ENCODE measurements at regions of chr6 and their contacts with region 1.

Region 1: DNA sequence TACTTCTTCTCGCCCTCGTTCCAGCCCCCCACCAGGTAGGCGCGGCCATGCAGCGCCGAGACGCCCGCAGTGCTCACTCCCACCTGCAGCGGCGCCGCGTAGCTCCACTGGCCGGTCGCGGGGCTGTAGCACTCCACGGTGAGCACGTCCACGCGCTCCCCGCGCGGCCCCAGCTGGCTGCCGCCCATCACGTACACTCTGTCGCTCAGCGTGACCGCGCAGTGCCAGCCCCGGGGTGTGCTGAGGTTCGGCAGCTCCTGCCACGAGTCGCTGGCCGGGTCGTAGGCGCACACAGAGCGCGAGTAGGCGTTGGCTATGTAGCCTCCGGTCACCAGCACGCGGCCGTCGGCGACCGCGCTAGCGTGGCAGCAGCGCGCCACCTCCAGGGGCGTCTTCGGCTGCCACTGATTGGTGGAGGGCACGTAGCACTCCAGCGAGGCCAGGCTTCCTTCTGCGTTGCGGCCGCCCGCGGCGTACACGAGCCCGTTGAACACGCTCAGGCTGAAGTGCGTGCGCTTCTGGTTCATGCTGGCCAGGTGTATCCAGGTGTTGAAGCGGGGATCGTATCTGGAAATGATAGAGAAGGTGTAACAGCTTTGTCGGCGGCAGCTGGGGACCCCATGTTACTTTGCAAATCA is 13.7 kb downstream of the KLHL31 start:
- DNase-seq: peak; percentile 57 to 91 (median 79)
- ATAC-seq: peak; percentile 86
- H3K4me3 ChIP-seq: peak overlapping the region; percentile 67 to 81
- H3K4me3 Mint-ChIP-seq: peak overlapping the region; percentile 91
- H3K27ac ChIP-seq: peak overlapping the region; percentile 54 to 65
- H3K27ac Mint-ChIP-seq: peak overlapping the region; percentile 89
- H3K4me1 ChIP-seq: peaks cover 32% of the 10 kb centered on the region
- H3K4me1 Mint-ChIP-seq: peaks cover 32% of the 10 kb centered on the region
- H3K27me3 ChIP-seq: no peaks in the 10 kb centered on the region
- H3K27me3 Mint-ChIP-seq: no peaks in the 10 kb centered on the region
- CTCF ChIP-seq: no peak

Region 2: DNA sequence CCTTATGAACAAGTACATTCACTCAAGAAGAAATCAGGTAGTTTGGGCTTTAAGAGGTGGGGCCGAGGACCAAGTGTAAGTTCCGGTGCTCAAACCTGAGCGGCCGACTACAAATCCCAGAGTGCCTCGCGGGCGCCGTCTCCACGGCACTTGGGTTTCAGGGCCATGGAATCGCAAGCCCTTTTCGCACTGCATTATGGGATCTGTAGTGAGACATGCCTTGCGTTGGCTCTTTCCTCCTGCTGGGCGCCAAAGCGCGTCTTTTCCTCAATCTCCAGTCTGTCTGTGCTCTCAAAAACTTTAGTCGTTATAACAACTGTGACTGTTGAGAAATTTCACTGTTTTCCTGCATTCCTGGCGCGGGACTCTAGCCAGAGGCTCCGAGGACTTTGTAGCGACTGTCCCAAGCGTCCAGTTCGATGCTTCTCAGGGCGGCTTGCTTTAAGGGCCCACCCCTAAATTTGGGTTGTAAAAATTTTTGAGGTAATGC is 587.1 kb before region 1 on chr6:
- CTCF ChIA-PET with region 1: interaction called, 3 read pairs
- POLR2A ChIA-PET with region 1: no interaction called
- intact Hi-C with region 1: loop called in 1 of 2 experiments (anchors 2 kb)
- DNase-seq: peak; percentile 90 to 98 (median 96)
- ATAC-seq: peak; percentile 83
- H3K4me3 ChIP-seq: peak overlapping the region; percentile 79 to 83
- H3K4me3 Mint-ChIP-seq: peak overlapping the region; percentile 100
- H3K27ac ChIP-seq: peak overlapping the region; percentile 55 to 81
- H3K27ac Mint-ChIP-seq: peak overlapping the region; percentile 98
- H3K4me1 ChIP-seq: peaks cover 39% of the 10 kb centered on the region
- H3K4me1 Mint-ChIP-seq: peaks cover 60% of the 10 kb centered on the region
- H3K27me3 ChIP-seq: no peaks in the 10 kb centered on the region
- H3K27me3 Mint-ChIP-seq: no peaks in the 10 kb centered on the region
- CTCF ChIP-seq: no peak

Region 3: GRCh38 chr6:53879608-53880007 is 227.7 kb after region 1 on chr6:
- CTCF ChIA-PET with region 1: no interaction called
- POLR2A ChIA-PET with region 1: no interaction called
- intact Hi-C with region 1: no loop called
- DNase-seq: no peak
- ATAC-seq: no peak
- H3K4me3 ChIP-seq: no peak overlapping the region
- H3K4me3 Mint-ChIP-seq: no peak overlapping the region
- H3K27ac ChIP-seq: no peak overlapping the region
- H3K27ac Mint-ChIP-seq: no peak overlapping the region
- H3K4me1 ChIP-seq: no peaks in the 10 kb centered on the region
- H3K4me1 Mint-ChIP-seq: no peaks in the 10 kb centered on the region
- H3K27me3 ChIP-seq: no peaks in the 10 kb centered on the region
- H3K27me3 Mint-ChIP-seq: no peaks in the 10 kb centered on the region
- CTCF ChIP-seq: no peak

Region 4: GRCh38 chr6:54503144-54503543 is 851.3 kb after region 1 on chr6:
- CTCF ChIA-PET with region 1: no interaction called
- POLR2A ChIA-PET with region 1: no interaction called
- intact Hi-C with region 1: no loop called
- DNase-seq: no peak
- ATAC-seq: no peak
- H3K4me3 ChIP-seq: no peak overlapping the region
- H3K4me3 Mint-ChIP-seq: no peak overlapping the region
- H3K27ac ChIP-seq: no peak overlapping the region
- H3K27ac Mint-ChIP-seq: no peak overlapping the region
- H3K4me1 ChIP-seq: no peaks in the 10 kb centered on the region
- H3K4me1 Mint-ChIP-seq: no peaks in the 10 kb centered on the region
- H3K27me3 ChIP-seq: no peaks in the 10 kb centered on the region
- H3K27me3 Mint-ChIP-seq: no peaks in the 10 kb centered on the region
- CTCF ChIP-seq: no peak

Measured in CD8-positive, alpha-beta T cell (primary cell).